Vagina (tissue), 2 donors: ENCODE measurements at regions of chr3 and their contacts with region 1.

Region 1: DNA sequence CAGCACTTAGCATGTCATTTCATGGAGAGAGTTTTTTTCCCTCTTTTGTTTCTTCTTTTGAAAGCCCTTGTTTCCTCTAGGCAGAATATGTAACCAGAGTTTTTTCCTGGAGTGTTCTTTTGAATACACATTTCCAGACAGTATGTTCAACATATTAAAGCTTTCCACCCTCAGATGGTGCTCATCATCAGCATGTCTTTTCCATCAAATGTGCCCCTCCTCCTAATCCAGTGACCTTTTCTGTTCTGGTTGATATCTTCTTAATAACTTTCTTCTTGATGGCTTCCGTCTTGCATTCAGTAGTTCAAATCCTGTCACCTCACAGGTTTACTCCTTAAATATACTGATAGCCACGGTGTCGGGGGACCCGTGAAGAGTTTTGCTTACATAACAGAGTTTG is 78.6 kb downstream of the FNDC3B start:
- DNase-seq: no peak
- H3K4me3 ChIP-seq: no peak overlapping the region
- H3K27ac ChIP-seq: no peak overlapping the region
- H3K4me1 ChIP-seq: peaks cover 16% of the 10 kb centered on the region
- H3K27me3 ChIP-seq: no peaks in the 10 kb centered on the region
- CTCF ChIP-seq: no peak
- POLR2A ChIP-seq: no peak

Region 2: GRCh38 chr3:172074586-172074985 is 43.4 kb before region 1 on chr3:
- intact Hi-C with region 1: loop called (anchors 1 kb)
- DNase-seq: no peak
- H3K4me3 ChIP-seq: no peak overlapping the region
- H3K27ac ChIP-seq: peak overlapping the region; percentile 25
- H3K4me1 ChIP-seq: peaks cover 42% of the 10 kb centered on the region
- H3K27me3 ChIP-seq: no peaks in the 10 kb centered on the region
- CTCF ChIP-seq: no peak
- POLR2A ChIP-seq: no peak